ENCODE measurements at regions of chr16 and their contacts with region 1.

Region 1: DNA sequence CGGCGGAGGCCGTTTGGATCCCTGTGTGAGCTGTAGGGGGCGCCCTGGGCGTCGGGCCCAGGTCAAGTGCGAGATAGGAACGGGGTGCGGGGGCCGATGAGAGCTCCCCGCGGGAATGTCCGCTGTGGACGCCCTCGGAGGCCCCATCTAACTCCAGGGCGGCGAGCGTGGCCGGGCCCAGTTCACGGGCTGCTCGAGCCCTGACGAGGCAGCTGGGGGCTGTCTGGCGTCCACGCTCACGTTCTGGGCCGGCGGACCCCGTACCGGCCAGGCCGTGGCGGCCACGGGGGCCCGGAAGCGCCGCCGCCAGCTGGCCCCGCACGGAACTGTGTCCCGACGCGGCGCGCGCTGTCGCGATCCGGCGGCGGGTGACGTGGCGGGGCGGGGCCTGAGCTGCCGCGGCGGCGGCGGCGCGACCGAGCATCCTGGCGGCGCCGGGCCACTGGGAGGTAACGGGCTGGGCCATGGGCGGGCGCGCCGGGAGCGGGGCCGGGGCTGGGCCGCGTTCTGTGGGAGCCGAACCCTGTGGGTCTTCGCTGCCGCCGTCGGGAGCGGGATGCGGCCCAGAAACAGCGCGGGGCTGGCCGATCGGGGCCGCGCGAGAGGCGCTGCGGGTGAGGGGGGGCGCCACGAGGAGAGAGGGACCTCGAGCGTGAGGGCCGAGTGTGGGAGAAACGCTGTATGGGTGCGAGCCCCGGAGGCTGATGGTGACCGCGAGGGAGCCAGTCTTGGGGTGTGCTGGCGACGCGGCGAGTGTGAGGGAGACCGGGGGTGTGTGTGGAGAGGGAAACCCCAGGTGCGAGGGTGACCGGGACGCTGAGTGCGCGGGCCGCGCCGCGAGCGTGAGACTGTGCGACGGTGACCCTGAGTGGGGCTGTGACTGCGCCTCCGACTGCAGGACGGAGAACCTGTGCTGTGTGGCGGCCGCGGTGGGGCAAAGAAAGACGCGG is at the start of gene SLC7A6:
- DNase-seq: peak; percentile 62
- H3K4me3 ChIP-seq: peak within 1 kb of the TSS; percentile 59 to 75 (median 68)
- H3K27ac ChIP-seq: peak within 1 kb of the TSS; percentile 67
- H3K4me1 ChIP-seq: peaks cover 11% of the 10 kb centered on the region
- H3K27me3 ChIP-seq: no peaks in the 10 kb centered on the region
- CTCF ChIP-seq: peak; percentile 51 to 71
- total RNA-seq, gene SLC7A6: 27.0 to 37.1 TPM

Region 2: DNA sequence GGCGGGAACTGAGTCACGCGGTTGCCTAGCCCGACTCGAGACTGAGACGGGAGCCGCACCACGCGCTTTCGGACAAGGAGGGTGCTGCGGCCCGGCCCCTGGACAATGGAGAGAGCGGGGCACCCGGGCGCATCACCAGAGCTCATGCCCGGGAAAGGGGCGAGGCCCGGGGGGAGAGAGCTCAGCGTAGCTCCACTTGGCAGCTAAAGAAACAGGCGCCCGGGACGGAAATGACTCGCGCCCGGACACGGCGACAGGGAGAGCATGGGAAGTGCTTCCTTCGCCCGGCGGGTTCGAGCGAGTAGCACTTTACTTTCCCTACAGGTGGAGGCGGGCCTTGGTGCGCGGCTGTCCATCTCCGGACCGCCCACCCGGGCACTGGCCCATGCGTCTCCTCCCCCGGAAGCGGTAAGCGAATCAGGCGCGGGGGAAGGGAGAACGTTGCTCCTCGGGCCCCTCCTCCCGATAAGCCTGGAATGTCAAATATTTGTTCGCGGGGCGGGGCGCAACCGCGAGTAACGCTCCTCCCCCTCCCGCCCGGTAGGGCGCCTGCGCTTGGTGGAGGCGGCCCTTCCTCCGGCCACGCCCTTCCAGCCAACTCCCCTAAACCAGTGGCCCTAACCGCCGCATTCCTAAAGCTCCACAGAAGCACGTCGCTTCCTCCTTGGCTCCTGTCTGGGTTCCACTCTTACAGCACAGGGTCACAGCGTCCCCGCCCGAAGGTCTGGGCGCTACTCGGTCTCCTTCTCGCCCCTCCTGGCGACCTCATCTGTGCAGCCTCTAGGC is 27.0 kb before region 1 on chr16:
- CTCF ChIA-PET with region 1: interaction called, 5 read pairs
- dilution Hi-C with region 1: no loop called
- in situ Hi-C with region 1: no loop called
- intact Hi-C with region 1: loop called (anchors 2 kb)
- DNase-seq: peak; percentile 99
- H3K4me3 ChIP-seq: peak overlapping the region; percentile 67 to 69 (median 67)
- H3K27ac ChIP-seq: peak overlapping the region; percentile 82
- H3K4me1 ChIP-seq: peaks cover 36% of the 10 kb centered on the region
- H3K27me3 ChIP-seq: no peaks in the 10 kb centered on the region
- CTCF ChIP-seq: no peak

Region 3: GRCh38 chr16:68298907-68299561 is 34.6 kb after region 1 on chr16:
- CTCF ChIA-PET with region 1: interaction called, 13 read pairs
- dilution Hi-C with region 1: no loop called
- in situ Hi-C with region 1: no loop called
- intact Hi-C with region 1: loop called (anchors 1 kb)
- DNase-seq: peak; percentile 75
- H3K4me3 ChIP-seq: no peak overlapping the region
- H3K27ac ChIP-seq: peak overlapping the region; percentile 67
- H3K4me1 ChIP-seq: peaks cover 25% of the 10 kb centered on the region
- H3K27me3 ChIP-seq: no peaks in the 10 kb centered on the region
- CTCF ChIP-seq: no peak

Region 4: GRCh38 chr16:68310761-68311511 is 46.5 kb after region 1 on chr16 and contains the starts of genes PRMT7 and SLC7A6OS:
- CTCF ChIA-PET with region 1: interaction called, 21 read pairs
- dilution Hi-C with region 1: no loop called
- in situ Hi-C with region 1: no loop called
- intact Hi-C with region 1: loop called (anchors 1 kb)
- DNase-seq: peak; percentile 88
- H3K4me3 ChIP-seq: peak within 1 kb of the TSS; percentile 79 to 98 (median 86)
- H3K27ac ChIP-seq: peak within 1 kb of the TSS; percentile 62
- H3K4me1 ChIP-seq: peaks cover 10% of the 10 kb centered on the region
- H3K27me3 ChIP-seq: no peaks in the 10 kb centered on the region
- CTCF ChIP-seq: peak in 1 of 2 donors; percentile 14
- total RNA-seq, gene PRMT7: 31.9 to 38.3 TPM
- total RNA-seq, gene SLC7A6OS: 11.5 to 15.6 TPM

Region 5: GRCh38 chr16:68490829-68491575 is 226.6 kb after region 1 on chr16:
- CTCF ChIA-PET with region 1: interaction called, 5 read pairs
- dilution Hi-C with region 1: no loop called
- in situ Hi-C with region 1: loop called in 1 of 2 experiments (anchors 25 kb)
- intact Hi-C with region 1: no loop called
- DNase-seq: peak; percentile 91
- H3K4me3 ChIP-seq: no peak overlapping the region
- H3K27ac ChIP-seq: peak overlapping the region; percentile 4
- H3K4me1 ChIP-seq: peaks cover 13% of the 10 kb centered on the region
- H3K27me3 ChIP-seq: no peaks in the 10 kb centered on the region
- CTCF ChIP-seq: no peak

Region 6: GRCh38 chr16:68512183-68512582 is 247.8 kb after region 1 on chr16:
- CTCF ChIA-PET with region 1: no interaction called
- dilution Hi-C with region 1: no loop called
- in situ Hi-C with region 1: no loop called
- intact Hi-C with region 1: loop called (anchors 5 kb)
- DNase-seq: no peak
- H3K4me3 ChIP-seq: no peak overlapping the region
- H3K27ac ChIP-seq: no peak overlapping the region
- H3K4me1 ChIP-seq: peaks cover 4% of the 10 kb centered on the region
- H3K27me3 ChIP-seq: peaks cover 3% of the 10 kb centered on the region
- CTCF ChIP-seq: no peak

Measured in mammary epithelial cell (primary cell).